GM10248 (cell line): ENCODE measurements at regions of chr12 and their contacts with region 1.

Region 1: GRCh38 chr12:117367011-117367638 is 5.7 kb upstream of the NOS1 start:
- DNase-seq: peak; percentile 75
- CTCF ChIP-seq: peak; percentile 79

Region 2: DNA sequence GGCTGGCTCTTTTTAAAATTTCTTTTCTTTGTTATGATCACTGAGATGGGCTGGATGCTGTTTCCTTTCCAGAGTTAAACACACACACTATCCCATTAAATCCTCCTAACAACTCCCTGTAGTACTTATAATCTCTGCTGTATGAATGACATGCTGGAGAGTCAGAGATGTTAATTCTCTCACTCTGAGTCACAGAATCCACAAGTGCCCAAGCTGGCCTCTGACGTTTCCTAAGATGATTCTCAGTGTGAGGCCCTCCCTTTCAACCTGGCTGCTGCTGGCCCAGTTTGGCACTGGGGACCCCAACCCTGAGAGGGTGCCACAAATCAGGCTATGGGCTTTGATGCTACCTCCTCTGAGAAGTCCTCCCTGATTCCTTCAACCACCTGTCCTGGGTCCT is 11.1 kb before region 1 on chr12:
- CTCF ChIA-PET with region 1: interaction called, 31 read pairs
- POLR2A ChIA-PET with region 1: no interaction called
- DNase-seq: no peak
- CTCF ChIP-seq: no peak

Region 3: DNA sequence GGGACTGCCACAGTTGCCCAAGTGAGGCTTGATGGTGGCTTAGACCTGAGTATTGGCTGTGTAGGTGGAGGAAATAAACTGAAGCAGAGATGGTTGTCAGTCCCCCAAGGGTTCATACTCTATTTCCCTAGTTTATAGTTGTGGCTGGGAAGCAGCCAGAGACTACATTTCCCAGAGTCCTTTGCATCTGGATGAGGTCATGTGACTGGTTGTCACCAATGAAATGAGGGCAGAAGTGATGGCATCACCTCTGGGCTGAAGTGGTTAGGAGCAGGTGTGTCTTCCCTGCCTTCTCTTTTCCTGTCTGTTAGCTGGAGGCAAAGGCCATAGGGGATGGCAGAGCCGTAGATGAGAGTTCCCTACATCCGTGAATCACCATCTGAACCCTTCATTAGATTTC is 10.6 kb after region 1 on chr12:
- CTCF ChIA-PET with region 1: interaction called, 35 read pairs
- POLR2A ChIA-PET with region 1: no interaction called
- DNase-seq: no peak
- CTCF ChIP-seq: no peak

Region 4: DNA sequence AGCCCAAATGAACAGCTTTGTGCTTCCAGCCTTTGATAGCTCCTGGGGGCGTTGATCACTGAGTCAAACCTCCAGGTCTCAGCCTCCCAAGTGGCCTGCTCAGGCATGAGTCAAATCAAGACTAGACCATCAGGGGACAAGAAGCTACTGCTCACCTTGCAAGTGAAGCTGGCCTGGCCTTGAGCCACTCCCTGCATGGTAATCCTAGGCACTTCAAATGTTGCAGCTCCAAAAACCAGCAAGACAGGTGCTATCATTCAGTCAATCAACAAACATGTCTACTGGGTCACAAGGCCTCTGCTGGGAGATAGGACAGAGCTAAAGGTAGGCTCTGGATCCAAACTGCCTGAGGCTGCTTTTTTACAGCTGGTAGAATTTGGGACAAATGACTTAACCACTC is 27.4 kb after region 1 on chr12:
- CTCF ChIA-PET with region 1: interaction called, 19 read pairs
- POLR2A ChIA-PET with region 1: no interaction called
- DNase-seq: no peak
- CTCF ChIP-seq: no peak

Region 5: DNA sequence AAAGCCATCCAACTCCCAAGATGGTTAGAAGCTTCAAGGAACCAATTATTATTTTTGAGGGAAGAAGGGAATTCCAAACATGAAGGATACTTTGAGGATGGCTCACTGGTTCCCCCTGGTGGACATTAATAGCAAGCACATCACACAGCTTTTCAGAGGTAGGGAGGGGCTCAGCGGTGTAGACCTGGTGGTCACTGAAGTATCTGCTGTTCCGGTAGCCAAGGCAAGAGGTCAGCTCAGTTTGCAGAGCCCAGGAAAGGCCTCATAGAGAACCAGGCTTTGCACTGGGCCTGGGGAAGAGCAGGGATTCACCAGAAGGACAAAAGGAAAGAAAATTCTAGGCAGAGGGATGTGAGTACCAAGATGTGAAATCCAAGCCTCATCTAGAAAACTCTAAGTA is 482.9 kb after region 1 on chr12:
- CTCF ChIA-PET with region 1: interaction called, 33 read pairs
- POLR2A ChIA-PET with region 1: no interaction called
- DNase-seq: peak; percentile 55
- CTCF ChIP-seq: peak; percentile 70